Activated CD8-positive, alpha-beta memory T cell treated with anti-CD3 and anti-CD28 coated beads, Interleukin-2, amount 10 ng/mL, durations not matched to agents 7 days and 5 days (primary cell): ENCODE measurements at regions of chr17 and their contacts with region 1.

Region 1: GRCh38 chr17:50094753-50095619 is at the start of gene PDK2:
- DNase-seq: peak; percentile 98
- ATAC-seq: peak; percentile 96
- H3K4me3 Mint-ChIP-seq: peak within 1 kb of the TSS; percentile 96
- H3K27ac Mint-ChIP-seq: peak within 1 kb of the TSS; percentile 91
- H3K4me1 Mint-ChIP-seq: peaks cover 24% of the 10 kb centered on the region
- H3K27me3 Mint-ChIP-seq: no peaks in the 10 kb centered on the region
- total RNA-seq, gene PDK2: 13.6 to 20.9 TPM

Region 2: GRCh38 chr17:49798182-49798581 is 296.8 kb before region 1 on chr17:
- CTCF ChIA-PET with region 1: no interaction called
- DNase-seq: no peak
- ATAC-seq: no peak
- H3K4me3 Mint-ChIP-seq: no peak overlapping the region
- H3K27ac Mint-ChIP-seq: peak overlapping the region; percentile 9
- H3K4me1 Mint-ChIP-seq: peaks cover 47% of the 10 kb centered on the region
- H3K27me3 Mint-ChIP-seq: no peaks in the 10 kb centered on the region

Region 3: DNA sequence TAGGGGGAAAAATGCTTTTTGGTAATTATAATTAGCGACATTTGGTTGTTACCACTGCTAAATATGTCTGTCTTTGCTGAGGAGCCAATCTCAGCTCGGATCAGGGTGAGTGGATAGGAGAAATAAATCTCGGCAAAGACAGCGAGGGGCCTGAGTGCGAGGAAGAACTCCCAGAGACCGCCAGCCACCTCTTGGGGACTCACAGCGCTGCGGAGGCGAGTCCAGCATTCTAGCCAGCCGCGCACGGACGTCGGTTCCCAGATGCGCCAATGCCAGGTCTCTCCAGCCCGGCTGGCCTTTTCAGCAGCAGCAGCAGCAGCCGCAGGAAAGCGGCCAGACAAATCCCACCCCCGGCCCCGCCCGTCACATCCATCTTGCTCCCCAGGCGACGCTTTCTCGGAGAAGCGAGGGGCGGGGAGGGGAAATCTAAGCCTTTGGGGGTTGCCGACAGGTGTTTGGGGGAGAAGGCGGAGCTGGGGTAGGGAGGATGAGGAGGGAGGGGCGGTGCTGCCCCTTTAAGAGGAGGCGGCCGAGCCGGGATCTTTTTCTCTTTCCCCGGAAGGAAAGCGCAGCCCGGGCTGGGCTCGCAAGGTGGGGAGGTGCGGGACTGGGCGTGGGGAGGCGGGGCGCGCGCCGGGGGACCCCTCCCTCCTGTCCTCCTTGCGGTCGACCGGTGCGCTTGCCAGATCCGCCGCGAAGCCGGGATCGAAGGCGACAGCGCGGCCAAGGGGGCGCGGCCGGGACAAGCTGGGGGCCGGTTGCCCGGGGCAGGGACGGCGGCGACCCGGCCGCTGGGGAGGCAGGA is 39.4 kb before region 1 on chr17 and contains the start of gene ITGA3:
- CTCF ChIA-PET with region 1: interaction called, 30 read pairs
- DNase-seq: peak; percentile 70
- ATAC-seq: peak; percentile 62
- H3K4me3 Mint-ChIP-seq: peak within 1 kb of the TSS; percentile 84
- H3K27ac Mint-ChIP-seq: peak within 1 kb of the TSS; percentile 58
- H3K4me1 Mint-ChIP-seq: peaks cover 37% of the 10 kb centered on the region
- H3K27me3 Mint-ChIP-seq: peaks cover 7% of the 10 kb centered on the region
- total RNA-seq, gene ITGA3: 10.3 to 11.3 TPM

Region 4: DNA sequence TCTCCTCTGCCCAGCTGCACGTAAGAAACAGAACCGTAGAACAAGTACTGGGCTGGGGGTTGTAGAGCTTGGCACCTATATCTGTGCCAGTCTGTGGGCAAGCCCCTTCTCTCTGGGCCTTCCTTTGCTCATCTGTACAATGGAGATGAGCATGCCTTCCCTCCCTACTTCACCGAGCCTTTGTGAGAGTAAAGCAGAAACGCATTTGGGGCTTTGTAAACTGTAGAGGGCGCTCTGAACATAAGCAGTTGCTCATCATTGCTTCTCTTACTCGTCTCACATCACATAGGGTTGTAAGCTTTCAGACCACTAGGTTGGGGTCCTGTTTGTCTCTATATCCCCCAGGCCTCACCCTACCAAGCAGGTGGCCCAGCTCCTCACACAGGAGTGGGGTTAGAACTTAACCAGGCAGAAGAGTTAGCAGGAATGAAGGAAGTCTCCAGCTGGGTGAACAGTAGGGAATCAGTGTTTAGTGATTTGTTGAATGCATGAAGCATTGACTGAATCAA is 19.9 kb after region 1 on chr17:
- CTCF ChIA-PET with region 1: interaction called, 21 read pairs
- DNase-seq: peak; percentile 68
- ATAC-seq: peak; percentile 50
- H3K4me3 Mint-ChIP-seq: no peak overlapping the region
- H3K27ac Mint-ChIP-seq: no peak overlapping the region
- H3K4me1 Mint-ChIP-seq: peaks cover 7% of the 10 kb centered on the region
- H3K27me3 Mint-ChIP-seq: peaks cover 43% of the 10 kb centered on the region

Region 5: DNA sequence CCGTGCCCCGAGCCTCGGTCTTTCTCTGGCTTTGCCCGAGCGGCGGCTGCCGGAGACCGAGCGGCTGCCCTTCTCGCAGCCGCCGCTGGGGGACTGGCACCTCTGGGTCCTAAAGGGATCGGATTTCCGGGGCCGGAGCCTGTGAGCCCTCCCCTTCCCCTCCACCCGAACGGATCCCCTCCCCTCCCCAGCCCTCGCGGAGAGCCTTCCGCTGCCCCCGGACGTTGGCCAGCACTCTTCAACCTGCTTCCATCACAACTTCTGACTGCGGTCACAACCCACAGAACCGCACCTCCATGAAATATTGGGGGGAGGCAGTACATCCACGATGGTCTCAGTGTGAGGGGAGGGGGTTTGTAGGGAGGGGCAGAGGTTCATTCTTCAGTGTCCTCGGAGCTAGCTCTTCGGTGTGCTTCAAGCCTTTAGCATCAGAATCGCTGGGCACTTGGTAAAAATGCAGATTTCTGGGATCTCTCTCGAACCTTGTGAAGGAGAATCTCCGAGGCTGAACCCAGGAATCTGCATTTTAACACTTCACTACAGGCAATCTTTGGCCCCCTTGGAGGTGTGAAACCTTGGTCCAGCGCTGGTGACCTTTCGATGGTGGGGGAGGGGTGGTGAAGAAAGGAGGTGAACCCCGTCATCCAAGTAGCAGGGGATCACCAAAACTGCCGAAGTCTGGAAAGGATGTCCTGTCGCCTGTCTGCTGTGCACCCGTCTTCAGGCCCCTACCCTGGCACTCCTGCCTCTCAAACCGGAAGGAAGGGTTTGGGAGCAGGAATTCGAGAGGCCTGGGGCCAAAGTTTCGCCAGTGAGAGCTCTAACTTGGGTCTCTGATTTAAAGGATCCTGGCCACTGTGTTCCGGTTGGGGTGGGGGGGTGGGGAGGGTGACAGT is 56.3 kb after region 1 on chr17:
- CTCF ChIA-PET with region 1: interaction called, 23 read pairs
- DNase-seq: peak; percentile 96
- ATAC-seq: peak; percentile 81
- H3K4me3 Mint-ChIP-seq: peak overlapping the region; percentile 80
- H3K27ac Mint-ChIP-seq: peak overlapping the region; percentile 96
- H3K4me1 Mint-ChIP-seq: peaks cover 43% of the 10 kb centered on the region
- H3K27me3 Mint-ChIP-seq: no peaks in the 10 kb centered on the region

Region 6: GRCh38 chr17:50169121-50169764 is 74.3 kb after region 1 on chr17:
- CTCF ChIA-PET with region 1: interaction called, 10 read pairs
- DNase-seq: peak; percentile 75
- ATAC-seq: peak; percentile 74
- H3K4me3 Mint-ChIP-seq: peak overlapping the region; percentile 11
- H3K27ac Mint-ChIP-seq: peak overlapping the region; percentile 47
- H3K4me1 Mint-ChIP-seq: peaks cover 22% of the 10 kb centered on the region
- H3K27me3 Mint-ChIP-seq: no peaks in the 10 kb centered on the region

Region 7: GRCh38 chr17:50218771-50219315 is 123.9 kb after region 1 on chr17:
- CTCF ChIA-PET with region 1: no interaction called
- DNase-seq: no peak
- ATAC-seq: no peak
- H3K4me3 Mint-ChIP-seq: no peak overlapping the region
- H3K27ac Mint-ChIP-seq: no peak overlapping the region
- H3K4me1 Mint-ChIP-seq: peaks cover 9% of the 10 kb centered on the region
- H3K27me3 Mint-ChIP-seq: peaks cover 52% of the 10 kb centered on the region